Aorta (tissue), 5 donors: ENCODE measurements at regions of chr17 and their contacts with region 1.

Region 1: GRCh38 chr17:4789901-4790704 is 1.3 kb downstream of the GLTPD2 start:
- DNase-seq: peak; percentile 90 to 94
- ATAC-seq: peak; percentile 94
- H3K4me3 ChIP-seq: peak overlapping the region; percentile 50 to 80
- H3K27ac ChIP-seq: peak overlapping the region in 1 of 2 donors; percentile 93
- H3K4me1 ChIP-seq: no peaks in the 10 kb centered on the region
- H3K27me3 ChIP-seq: no peaks in the 10 kb centered on the region

Region 2: GRCh38 chr17:4733073-4733531 is 57.0 kb before region 1 on chr17:
- intact Hi-C with region 1: loop called (anchors 5 to 10 kb)
- DNase-seq: peak in 1 of 2 donors; percentile 76
- ATAC-seq: no peak
- H3K4me3 ChIP-seq: no peak overlapping the region
- H3K27ac ChIP-seq: no peak overlapping the region
- H3K4me1 ChIP-seq: no peaks in the 10 kb centered on the region
- H3K27me3 ChIP-seq: no peaks in the 10 kb centered on the region

Region 3: DNA sequence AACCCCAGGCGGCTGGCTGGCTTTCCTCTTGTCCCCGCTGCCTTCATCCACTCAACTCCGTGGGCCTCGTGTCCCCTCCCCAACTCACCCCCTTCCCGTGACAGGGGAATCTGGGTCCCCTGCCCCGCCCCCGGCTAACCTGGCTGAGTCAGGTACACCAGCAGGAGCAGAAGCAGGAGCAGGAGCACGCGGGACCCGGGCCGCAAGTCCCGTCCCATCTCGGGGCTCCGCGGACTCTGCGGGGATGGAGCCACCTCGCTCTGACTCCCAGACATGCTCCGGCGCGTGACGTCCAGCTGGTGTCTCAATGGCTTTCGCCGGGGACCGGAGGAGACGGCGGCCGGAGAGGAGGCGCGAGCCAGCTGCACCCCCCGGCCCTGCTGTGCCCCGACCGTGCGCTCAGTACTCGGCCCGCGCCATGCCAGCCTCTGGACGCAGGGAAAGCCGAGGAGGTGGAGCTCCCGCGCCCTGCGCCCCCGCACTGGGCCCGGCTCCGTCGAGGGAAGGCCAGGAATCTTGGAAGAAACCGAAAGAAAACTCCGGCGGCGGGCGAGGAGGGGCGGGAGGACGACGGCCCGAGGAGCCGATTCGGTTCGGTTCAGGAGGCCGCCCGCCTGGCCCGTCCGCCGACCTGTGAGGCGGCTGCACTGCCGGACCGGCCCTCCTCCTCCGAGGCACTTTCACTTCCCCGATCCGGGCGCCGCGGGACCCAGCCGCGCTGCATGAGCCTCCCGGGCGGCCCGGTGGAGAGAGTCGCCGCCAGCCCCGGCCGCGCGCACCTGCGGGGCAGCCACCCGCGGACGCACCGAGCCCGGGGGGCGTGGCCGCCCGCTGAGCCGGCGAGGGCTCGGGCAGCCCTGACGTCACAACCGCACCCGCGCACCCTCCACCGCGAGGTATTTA is 50.7 kb before region 1 on chr17 and contains the starts of genes CXCL16 and ZMYND15:
- intact Hi-C with region 1: loop called (anchors 5 to 10 kb)
- DNase-seq: peak; percentile 78 to 90
- ATAC-seq: peak; percentile 70
- H3K4me3 ChIP-seq: peak within 1 kb of the TSS; percentile 61 to 62
- H3K27ac ChIP-seq: no peak within 1 kb of the TSS
- H3K4me1 ChIP-seq: no peaks in the 10 kb centered on the region
- H3K27me3 ChIP-seq: no peaks in the 10 kb centered on the region
- total RNA-seq, gene CXCL16: 35.9 to 64.0 TPM
- total RNA-seq, gene ZMYND15: 2.1 to 7.7 TPM

Region 4: DNA sequence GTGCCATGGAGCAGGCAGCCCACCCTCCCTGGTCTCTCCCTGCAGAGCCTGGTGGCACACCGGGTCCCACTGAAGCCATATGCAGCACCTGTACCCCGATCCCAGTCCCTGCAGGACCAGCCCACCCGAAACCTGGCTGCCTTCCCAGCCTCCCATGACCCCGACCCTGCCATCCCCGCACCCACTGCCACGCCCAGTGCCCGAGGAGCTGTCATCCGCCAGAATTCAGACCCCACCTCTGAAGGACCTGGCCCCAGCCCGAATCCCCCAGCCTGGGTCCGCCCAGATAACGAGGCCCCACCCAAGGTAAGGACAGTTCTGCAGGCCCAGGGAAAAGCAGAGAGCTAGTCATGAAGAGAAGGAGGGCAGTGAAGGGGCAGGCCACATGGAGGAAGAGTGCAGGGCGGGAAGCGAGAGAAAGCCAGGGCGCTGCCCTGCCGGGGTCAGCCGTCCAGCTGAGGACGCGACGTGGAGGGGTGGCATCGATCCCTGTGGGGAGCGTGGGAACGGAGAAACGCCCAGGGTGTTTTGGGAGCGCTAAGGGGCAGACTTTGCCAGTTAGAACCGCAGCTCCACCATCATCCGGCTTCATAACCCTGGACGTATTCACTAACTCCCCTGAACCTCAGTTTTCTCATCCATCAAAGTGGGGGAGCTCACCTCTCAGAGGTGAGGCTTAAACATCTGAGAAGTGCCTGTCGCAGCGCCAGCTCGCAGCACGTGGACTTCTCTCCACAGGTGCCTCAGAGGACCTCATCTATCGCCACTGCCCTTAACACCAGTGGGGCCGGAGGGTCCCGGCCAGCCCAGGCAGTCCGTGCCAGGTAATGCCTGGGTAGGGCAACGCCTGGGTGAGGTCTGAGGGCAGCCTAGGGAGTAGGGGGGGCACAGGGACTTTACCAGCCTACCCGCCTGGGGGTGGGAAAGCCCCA is 101.6 kb after region 1 on chr17:
- intact Hi-C with region 1: loop called (anchors 2 kb)
- DNase-seq: no peak
- ATAC-seq: no peak
- H3K4me3 ChIP-seq: no peak overlapping the region
- H3K27ac ChIP-seq: no peak overlapping the region
- H3K4me1 ChIP-seq: no peaks in the 10 kb centered on the region
- H3K27me3 ChIP-seq: no peaks in the 10 kb centered on the region